ENCODE measurements at regions of chr11 and their contacts with region 1.

Region 1: DNA sequence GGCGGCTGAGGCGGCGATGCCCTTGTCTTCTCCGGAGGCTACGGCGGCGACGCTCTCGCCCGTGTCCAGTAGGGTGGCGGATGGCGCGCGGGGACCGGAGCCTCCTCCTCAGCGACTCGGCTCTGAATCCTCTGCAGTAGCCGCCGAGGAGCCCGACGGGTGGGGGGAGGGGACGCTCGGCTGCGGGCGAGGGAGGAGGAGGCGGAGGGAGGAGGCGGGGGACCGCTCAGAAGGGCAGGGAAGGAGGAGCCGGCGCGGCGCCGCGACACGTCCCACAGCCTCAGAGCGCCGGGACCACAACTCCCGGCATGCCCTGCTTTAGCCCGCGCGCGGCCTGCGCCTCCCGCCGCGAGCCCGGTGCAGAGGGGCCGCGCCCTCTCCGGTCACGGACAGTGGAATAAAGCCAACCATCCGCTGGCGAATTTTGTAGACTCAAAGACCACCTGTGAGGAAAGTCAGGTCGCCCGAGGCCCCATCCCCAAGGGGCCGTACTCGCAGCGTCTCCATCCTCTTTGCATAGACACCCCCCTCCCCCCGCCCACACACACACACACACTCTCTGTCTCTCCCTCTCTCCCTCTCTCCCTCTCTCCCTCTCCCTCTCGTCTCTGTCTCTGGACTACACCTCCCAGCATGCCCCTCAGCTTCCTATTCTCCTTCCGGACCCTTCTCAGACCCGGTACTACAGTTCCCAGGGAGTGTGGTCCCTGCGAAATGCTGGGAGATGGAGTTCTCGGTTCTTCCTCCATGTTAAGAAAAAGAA is at the start of gene FAM168A:
- DNase-seq: peak; percentile 87 to 98 (median 92)
- ATAC-seq: peak; percentile 88
- H3K4me3 ChIP-seq: peak within 1 kb of the TSS; percentile 84
- H3K4me3 Mint-ChIP-seq: peak within 1 kb of the TSS; percentile 95
- H3K27ac ChIP-seq: peak within 1 kb of the TSS; percentile 68 to 77
- H3K27ac Mint-ChIP-seq: peak within 1 kb of the TSS; percentile 97
- H3K4me1 ChIP-seq: peaks cover 15% of the 10 kb centered on the region
- H3K4me1 Mint-ChIP-seq: peaks cover 47% of the 10 kb centered on the region
- H3K27me3 ChIP-seq: no peaks in the 10 kb centered on the region
- H3K27me3 Mint-ChIP-seq: no peaks in the 10 kb centered on the region
- CTCF ChIP-seq: peak; percentile 8
- total RNA-seq, gene FAM168A: 17.9 to 19.4 TPM

Region 2: DNA sequence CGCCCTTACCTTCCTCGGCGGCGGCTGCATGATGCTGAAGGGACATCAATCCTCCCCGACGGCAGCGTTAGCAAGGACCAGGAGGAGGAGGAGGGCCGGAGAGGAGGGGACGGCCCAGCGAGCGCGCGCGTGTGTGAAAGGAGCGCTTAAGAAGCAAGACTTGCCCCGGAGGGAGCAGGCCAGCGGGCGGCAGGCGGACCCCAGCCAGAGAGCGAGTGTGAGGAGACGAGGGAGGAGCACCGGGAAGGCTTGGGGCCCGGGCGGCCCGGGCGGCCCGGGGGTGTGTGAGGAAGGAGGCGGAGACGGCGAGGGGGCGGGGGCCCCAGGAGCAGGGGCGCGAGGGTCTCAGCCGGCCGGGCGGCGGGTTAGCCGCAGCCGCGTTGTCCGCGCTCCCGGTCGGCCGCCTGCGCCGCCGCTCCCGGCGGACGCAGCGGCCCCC is 456.3 kb before region 1 on chr11:
- CTCF ChIA-PET with region 1: no interaction called
- POLR2A ChIA-PET with region 1: interaction called, 4 read pairs
- intact Hi-C with region 1: loop called in 1 of 2 experiments (anchors 10 kb)
- DNase-seq: peak in 9 of 14 experiments; percentile 35 to 83 (median 57)
- ATAC-seq: peak; percentile 29
- H3K4me3 ChIP-seq: peak overlapping the region; percentile 98
- H3K4me3 Mint-ChIP-seq: peak overlapping the region; percentile 99
- H3K27ac ChIP-seq: peak overlapping the region; percentile 76 to 98
- H3K27ac Mint-ChIP-seq: peak overlapping the region; percentile 96
- H3K4me1 ChIP-seq: peaks cover 26% of the 10 kb centered on the region
- H3K4me1 Mint-ChIP-seq: peaks cover 47% of the 10 kb centered on the region
- H3K27me3 ChIP-seq: no peaks in the 10 kb centered on the region
- H3K27me3 Mint-ChIP-seq: no peaks in the 10 kb centered on the region
- CTCF ChIP-seq: no peak

Region 3: DNA sequence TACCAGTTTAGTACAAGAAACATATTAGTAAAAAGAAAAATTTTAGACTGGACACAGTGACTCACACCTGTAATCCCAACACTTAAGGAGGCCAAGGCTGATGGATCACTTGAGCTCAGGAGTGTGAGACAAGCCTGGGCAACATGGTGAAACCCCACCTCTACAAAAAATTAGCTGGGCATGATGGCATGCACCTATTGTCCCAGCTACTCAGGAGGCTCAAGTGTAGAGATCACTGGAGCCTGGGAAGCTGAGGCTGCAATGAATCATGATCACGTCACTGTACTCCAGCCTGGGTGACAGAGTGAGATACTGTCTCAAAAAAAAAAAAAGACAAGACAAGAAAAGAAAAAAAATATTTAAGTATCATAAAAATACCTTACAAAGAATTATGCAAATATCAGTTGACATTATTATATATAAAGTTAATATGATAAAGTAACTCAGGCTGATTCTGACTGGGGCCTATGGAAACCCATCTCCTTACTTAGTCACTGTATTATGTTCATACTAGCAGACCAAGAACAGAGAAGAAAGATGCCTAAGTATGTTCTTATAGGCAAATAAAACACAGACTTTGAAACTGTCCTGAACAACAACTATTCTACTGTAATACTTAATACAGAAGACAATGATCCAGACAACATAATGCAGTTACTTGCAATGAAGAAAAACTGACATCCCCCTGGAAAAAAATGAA is 27.6 kb before region 1 on chr11:
- CTCF ChIA-PET with region 1: no interaction called
- POLR2A ChIA-PET with region 1: no interaction called
- intact Hi-C with region 1: no loop called
- DNase-seq: no peak
- ATAC-seq: no peak
- H3K4me3 ChIP-seq: no peak overlapping the region
- H3K4me3 Mint-ChIP-seq: no peak overlapping the region
- H3K27ac ChIP-seq: no peak overlapping the region
- H3K27ac Mint-ChIP-seq: no peak overlapping the region
- H3K4me1 ChIP-seq: no peaks in the 10 kb centered on the region
- H3K4me1 Mint-ChIP-seq: no peaks in the 10 kb centered on the region
- H3K27me3 ChIP-seq: no peaks in the 10 kb centered on the region
- H3K27me3 Mint-ChIP-seq: no peaks in the 10 kb centered on the region
- CTCF ChIP-seq: no peak

Region 4: GRCh38 chr11:73647459-73648100 is 49.4 kb after region 1 on chr11:
- CTCF ChIA-PET with region 1: interaction called, 4 read pairs
- POLR2A ChIA-PET with region 1: interaction called, 18 read pairs
- intact Hi-C with region 1: loop called (anchors 1 kb)
- DNase-seq: peak; percentile 90 to 97 (median 94)
- ATAC-seq: peak; percentile 96
- H3K4me3 ChIP-seq: peak overlapping the region; percentile 55
- H3K4me3 Mint-ChIP-seq: peak overlapping the region; percentile 90
- H3K27ac ChIP-seq: peak overlapping the region in 1 of 2 donors; percentile 34
- H3K27ac Mint-ChIP-seq: peak overlapping the region; percentile 91
- H3K4me1 ChIP-seq: peaks cover 25% of the 10 kb centered on the region
- H3K4me1 Mint-ChIP-seq: peaks cover 28% of the 10 kb centered on the region
- H3K27me3 ChIP-seq: no peaks in the 10 kb centered on the region
- H3K27me3 Mint-ChIP-seq: no peaks in the 10 kb centered on the region
- CTCF ChIP-seq: no peak

Region 5: DNA sequence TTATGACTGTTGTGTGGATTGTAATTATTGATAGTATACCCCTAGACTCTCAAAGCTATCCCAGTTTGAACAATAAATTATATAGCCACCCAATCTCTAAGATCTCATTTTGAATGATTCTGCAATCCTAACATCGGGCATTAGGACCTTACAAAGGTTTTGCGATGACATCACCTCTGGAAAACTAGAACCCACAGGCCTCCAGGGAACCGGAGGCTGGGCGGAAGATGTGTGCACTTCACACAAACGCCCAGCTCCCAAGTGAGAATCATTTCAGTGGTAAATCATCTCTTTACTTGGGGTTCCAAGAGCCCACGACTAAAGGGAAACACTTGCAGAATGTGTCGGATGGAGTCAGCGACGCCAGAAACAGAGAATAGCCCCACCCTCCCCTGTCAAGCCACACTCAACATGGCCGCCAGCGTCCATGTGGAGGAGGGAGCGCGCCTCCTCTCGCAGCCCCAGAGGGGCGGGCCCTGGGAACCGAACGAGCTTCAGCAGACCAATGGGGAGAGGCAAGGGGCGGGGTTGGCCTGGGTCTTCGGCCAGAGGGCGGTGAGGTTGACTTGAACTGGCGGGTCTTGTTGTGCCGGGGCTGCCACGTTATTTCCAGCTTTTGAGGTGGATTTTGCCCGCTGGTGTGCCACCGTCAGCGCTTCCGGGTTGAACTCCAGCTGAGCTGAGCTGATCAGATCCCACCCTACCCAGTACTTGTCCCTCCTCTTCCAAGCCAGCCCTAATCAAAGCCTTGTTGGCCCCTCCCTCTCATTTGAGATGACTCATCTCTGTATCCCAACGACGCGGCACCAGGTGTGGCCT is 181.2 kb after region 1 on chr11:
- CTCF ChIA-PET with region 1: no interaction called
- POLR2A ChIA-PET with region 1: interaction called, 12 read pairs
- intact Hi-C with region 1: loop called in 1 of 2 experiments (anchors 2 kb)
- DNase-seq: peak; percentile 95 to 99 (median 97)
- ATAC-seq: peak; percentile 95
- H3K4me3 ChIP-seq: peak overlapping the region; percentile 78
- H3K4me3 Mint-ChIP-seq: peak overlapping the region; percentile 95
- H3K27ac ChIP-seq: peak overlapping the region; percentile 95 to 99
- H3K27ac Mint-ChIP-seq: peak overlapping the region; percentile 99
- H3K4me1 ChIP-seq: peaks cover 13% of the 10 kb centered on the region
- H3K4me1 Mint-ChIP-seq: peaks cover 14% of the 10 kb centered on the region
- H3K27me3 ChIP-seq: no peaks in the 10 kb centered on the region
- H3K27me3 Mint-ChIP-seq: no peaks in the 10 kb centered on the region
- CTCF ChIP-seq: no peak

Region 6: GRCh38 chr11:73876424-73877300 is 278.5 kb after region 1 on chr11 and contains the starts of genes COA4 and PAAF1:
- CTCF ChIA-PET with region 1: no interaction called
- POLR2A ChIA-PET with region 1: no interaction called
- intact Hi-C with region 1: loop called in 1 of 2 experiments (anchors 5 kb)
- DNase-seq: peak; percentile 83 to 98 (median 90)
- ATAC-seq: peak; percentile 95
- H3K4me3 ChIP-seq: peak within 1 kb of the TSS; percentile 74
- H3K4me3 Mint-ChIP-seq: peak within 1 kb of the TSS; percentile 96
- H3K27ac ChIP-seq: peak within 1 kb of the TSS; percentile 71 to 90
- H3K27ac Mint-ChIP-seq: peak within 1 kb of the TSS; percentile 91
- H3K4me1 ChIP-seq: peaks cover 30% of the 10 kb centered on the region
- H3K4me1 Mint-ChIP-seq: peaks cover 52% of the 10 kb centered on the region
- H3K27me3 ChIP-seq: no peaks in the 10 kb centered on the region
- H3K27me3 Mint-ChIP-seq: no peaks in the 10 kb centered on the region
- CTCF ChIP-seq: no peak
- total RNA-seq, gene COA4: 20.7 to 23.9 TPM
- total RNA-seq, gene PAAF1: 6.2 to 7.6 TPM

Region 7: GRCh38 chr11:74948898-74949747 is 1351.0 kb after region 1 on chr11 and contains the starts of genes SPCS2 and XRRA1:
- CTCF ChIA-PET with region 1: no interaction called
- POLR2A ChIA-PET with region 1: no interaction called
- intact Hi-C with region 1: loop called in 1 of 2 experiments (anchors 10 kb)
- DNase-seq: peak; percentile 94 to 99 (median 97)
- ATAC-seq: peak; percentile 96
- H3K4me3 ChIP-seq: peak within 1 kb of the TSS; percentile 85
- H3K4me3 Mint-ChIP-seq: peak within 1 kb of the TSS; percentile 96
- H3K27ac ChIP-seq: peak within 1 kb of the TSS; percentile 71 to 76
- H3K27ac Mint-ChIP-seq: peak within 1 kb of the TSS; percentile 90
- H3K4me1 ChIP-seq: peaks cover 35% of the 10 kb centered on the region
- H3K4me1 Mint-ChIP-seq: peaks cover 65% of the 10 kb centered on the region
- H3K27me3 ChIP-seq: no peaks in the 10 kb centered on the region
- H3K27me3 Mint-ChIP-seq: no peaks in the 10 kb centered on the region
- CTCF ChIP-seq: no peak
- total RNA-seq, gene SPCS2: 36.5 to 42.9 TPM
- total RNA-seq, gene XRRA1: 12.2 to 12.5 TPM

Measured in CD4-positive, alpha-beta T cell (primary cell).